ENCODE measurements at regions of chr13 and their contacts with region 1.

Region 1: GRCh38 chr13:83286737-83287136 is 595.5 kb downstream of the SLITRK1 start:
- DNase-seq: no peak
- H3K4me3 Mint-ChIP-seq: no peak overlapping the region
- H3K27ac Mint-ChIP-seq: no peak overlapping the region
- H3K4me1 Mint-ChIP-seq: no peaks in the 10 kb centered on the region
- H3K27me3 Mint-ChIP-seq: no peaks in the 10 kb centered on the region

Region 2: DNA sequence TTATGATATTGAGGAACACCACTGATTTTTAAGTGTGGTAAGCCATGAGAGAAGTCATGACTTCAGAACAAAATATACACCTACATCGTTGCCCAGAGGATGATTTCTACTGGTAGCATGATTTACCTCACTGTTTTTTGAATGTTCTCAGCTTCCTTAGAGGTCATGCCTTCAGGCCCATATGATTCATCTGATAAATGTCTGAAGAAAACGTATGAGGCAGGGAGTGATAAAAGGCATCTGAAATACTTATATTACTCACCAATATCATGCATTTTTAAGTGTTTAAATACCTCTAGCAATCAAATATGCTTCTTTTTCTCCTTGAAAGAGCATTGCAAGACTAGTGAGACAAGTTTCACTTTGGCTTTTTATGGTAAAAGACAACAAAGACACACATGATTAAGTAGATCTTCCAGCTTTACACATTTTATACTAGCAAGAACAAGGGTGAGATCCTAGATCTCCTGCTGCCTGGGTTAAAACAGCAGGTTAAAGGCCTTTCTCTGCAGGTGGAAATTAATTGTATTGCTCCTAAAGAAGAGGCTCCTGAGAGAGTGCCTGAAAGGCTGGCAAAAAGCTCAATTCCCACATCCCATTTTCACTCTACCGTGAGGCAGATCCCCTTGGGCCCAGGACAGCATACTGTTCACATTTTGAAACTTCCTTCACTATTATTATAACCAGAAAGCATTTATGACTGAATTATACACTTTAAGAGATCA is 163.1 kb after region 1 on chr13:
- intact Hi-C with region 1: no loop called
- DNase-seq: no peak
- H3K4me3 Mint-ChIP-seq: no peak overlapping the region
- H3K27ac Mint-ChIP-seq: no peak overlapping the region
- H3K4me1 Mint-ChIP-seq: no peaks in the 10 kb centered on the region
- H3K27me3 Mint-ChIP-seq: no peaks in the 10 kb centered on the region

Region 3: GRCh38 chr13:83503424-83503823 is 216.7 kb after region 1 on chr13:
- intact Hi-C with region 1: loop called (anchors 5 kb)
- DNase-seq: no peak
- H3K4me3 Mint-ChIP-seq: no peak overlapping the region
- H3K27ac Mint-ChIP-seq: no peak overlapping the region
- H3K4me1 Mint-ChIP-seq: no peaks in the 10 kb centered on the region
- H3K27me3 Mint-ChIP-seq: no peaks in the 10 kb centered on the region